ENCODE measurements at regions of chr20 and their contacts with region 1.

Region 1: GRCh38 chr20:18412221-18412901 is 54.5 kb downstream of the DZANK1 start:
- DNase-seq: peak; percentile 28
- ATAC-seq: peak; percentile 80
- H3K4me3 ChIP-seq: peak overlapping the region; percentile 41
- H3K27ac ChIP-seq: peak overlapping the region; percentile 82
- H3K4me1 ChIP-seq: peaks cover 9% of the 10 kb centered on the region
- H3K27me3 ChIP-seq: no peaks in the 10 kb centered on the region
- CTCF ChIP-seq: no peak
- EP300 ChIP-seq: no peak
- POLR2A ChIP-seq: no peak
- RAD21 ChIP-seq: no peak

Region 2: DNA sequence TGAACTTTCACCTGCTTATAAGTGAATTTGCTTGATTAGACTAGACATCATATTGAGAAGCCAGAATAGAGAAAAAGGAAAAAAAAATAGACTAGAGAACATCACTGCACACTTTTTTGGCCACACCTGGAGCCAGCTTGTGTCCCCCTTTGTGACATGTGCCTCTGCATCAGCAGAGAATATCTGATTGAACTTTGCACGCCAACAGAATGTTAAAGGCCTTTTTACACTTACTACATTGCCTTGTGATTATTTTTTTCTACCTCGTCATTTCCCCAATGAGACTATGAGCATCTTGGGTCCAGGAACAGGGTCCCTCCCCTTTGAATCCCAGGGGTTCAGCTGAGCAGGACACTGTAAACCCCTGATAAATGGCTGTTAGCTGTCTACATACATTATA is 141.2 kb before region 1 on chr20:
- CTCF ChIA-PET with region 1: no interaction called
- POLR2A ChIA-PET with region 1: no interaction called
- RAD21 ChIA-PET with region 1: no interaction called
- SMC1A ChIA-PET with region 1: no interaction called
- in situ Hi-C with region 1: no loop called
- intact Hi-C with region 1: no loop called
- DNase-seq: no peak
- ATAC-seq: no peak
- H3K4me3 ChIP-seq: no peak overlapping the region
- H3K27ac ChIP-seq: no peak overlapping the region
- H3K4me1 ChIP-seq: no peaks in the 10 kb centered on the region
- H3K27me3 ChIP-seq: no peaks in the 10 kb centered on the region; a peak in 1 of 4 replicates
- CTCF ChIP-seq: no peak
- EP300 ChIP-seq: no peak
- POLR2A ChIP-seq: no peak
- RAD21 ChIP-seq: no peak

Region 3: GRCh38 chr20:18287915-18288748 is 124.2 kb before region 1 on chr20 and contains the start of gene ZNF133:
- CTCF ChIA-PET with region 1: no interaction called
- POLR2A ChIA-PET with region 1: interaction called, 3 read pairs
- RAD21 ChIA-PET with region 1: interaction called, 4 read pairs
- SMC1A ChIA-PET with region 1: no interaction called
- in situ Hi-C with region 1: no loop called
- intact Hi-C with region 1: loop called (anchors 1 kb)
- DNase-seq: peak; percentile 78
- ATAC-seq: peak; percentile 100
- H3K4me3 ChIP-seq: peak within 1 kb of the TSS; percentile 92
- H3K27ac ChIP-seq: peak within 1 kb of the TSS; percentile 94
- H3K4me1 ChIP-seq: peaks cover 11% of the 10 kb centered on the region
- H3K27me3 ChIP-seq: no peaks in the 10 kb centered on the region
- CTCF ChIP-seq: peak in 2 of 3 experiments; percentile 13 to 14; a peak in 2 of 6 replicates
- EP300 ChIP-seq: no peak
- POLR2A ChIP-seq: peak; percentile 97
- RAD21 ChIP-seq: no peak
- polyA plus RNA-seq, gene ZNF133: 2.0 to 2.2 TPM

Region 4: DNA sequence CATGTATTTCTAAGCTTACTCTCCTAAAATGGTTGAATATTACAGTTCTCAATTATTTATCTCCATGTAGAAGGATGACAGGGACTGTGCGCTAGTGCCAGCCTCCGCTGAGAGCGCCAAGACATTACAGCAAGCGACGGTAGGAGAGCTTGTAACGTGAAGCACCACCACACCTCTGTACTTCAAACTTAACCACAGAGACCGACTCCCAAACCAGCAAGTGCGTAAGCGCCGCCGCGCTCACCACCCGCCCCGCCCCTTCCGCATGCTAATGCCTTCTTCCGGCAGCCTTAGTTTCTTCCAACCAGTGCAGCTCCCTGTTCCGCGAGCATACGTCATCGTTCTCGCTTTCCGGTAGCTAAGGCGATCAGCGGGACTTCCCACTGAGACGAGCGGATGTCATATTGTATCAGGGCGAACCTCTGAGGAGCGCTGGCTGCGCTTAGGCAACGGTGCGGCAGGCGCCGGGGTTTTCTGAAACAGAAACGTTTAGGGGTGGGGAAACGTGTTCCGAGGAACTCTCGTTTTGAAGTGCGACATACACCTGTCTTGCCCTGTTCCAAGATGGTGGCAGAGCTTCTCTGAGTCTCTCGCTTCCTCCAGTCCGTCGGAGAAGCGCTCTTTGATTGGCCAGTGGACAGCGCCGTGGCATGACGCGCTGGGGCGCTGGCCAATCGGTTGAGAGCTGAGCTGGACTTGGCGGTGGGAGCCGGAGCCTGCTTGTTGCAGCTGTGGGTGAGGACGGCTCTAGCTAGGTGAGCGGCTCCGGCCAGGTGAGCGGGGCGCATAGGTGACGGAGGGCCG is 95.1 kb after region 1 on chr20 and contains the start of gene SEC23B:
- CTCF ChIA-PET with region 1: interaction called, 21 read pairs
- POLR2A ChIA-PET with region 1: interaction called, 10 read pairs
- RAD21 ChIA-PET with region 1: interaction called, 8 read pairs
- SMC1A ChIA-PET with region 1: interaction called, 8 read pairs
- in situ Hi-C with region 1: no loop called
- intact Hi-C with region 1: loop called (anchors 2 kb)
- DNase-seq: peak; percentile 96
- ATAC-seq: peak; percentile 96
- H3K4me3 ChIP-seq: peak within 1 kb of the TSS; percentile 80
- H3K27ac ChIP-seq: peak within 1 kb of the TSS; percentile 98
- H3K4me1 ChIP-seq: no peaks in the 10 kb centered on the region
- H3K27me3 ChIP-seq: no peaks in the 10 kb centered on the region
- CTCF ChIP-seq: no peak
- EP300 ChIP-seq: peak; percentile 34 to 36; a peak in 1 of 4 replicates
- POLR2A ChIP-seq: peak; percentile 91
- RAD21 ChIP-seq: no peak
- polyA plus RNA-seq, gene SEC23B: 49.1 to 73.2 TPM

Region 5: DNA sequence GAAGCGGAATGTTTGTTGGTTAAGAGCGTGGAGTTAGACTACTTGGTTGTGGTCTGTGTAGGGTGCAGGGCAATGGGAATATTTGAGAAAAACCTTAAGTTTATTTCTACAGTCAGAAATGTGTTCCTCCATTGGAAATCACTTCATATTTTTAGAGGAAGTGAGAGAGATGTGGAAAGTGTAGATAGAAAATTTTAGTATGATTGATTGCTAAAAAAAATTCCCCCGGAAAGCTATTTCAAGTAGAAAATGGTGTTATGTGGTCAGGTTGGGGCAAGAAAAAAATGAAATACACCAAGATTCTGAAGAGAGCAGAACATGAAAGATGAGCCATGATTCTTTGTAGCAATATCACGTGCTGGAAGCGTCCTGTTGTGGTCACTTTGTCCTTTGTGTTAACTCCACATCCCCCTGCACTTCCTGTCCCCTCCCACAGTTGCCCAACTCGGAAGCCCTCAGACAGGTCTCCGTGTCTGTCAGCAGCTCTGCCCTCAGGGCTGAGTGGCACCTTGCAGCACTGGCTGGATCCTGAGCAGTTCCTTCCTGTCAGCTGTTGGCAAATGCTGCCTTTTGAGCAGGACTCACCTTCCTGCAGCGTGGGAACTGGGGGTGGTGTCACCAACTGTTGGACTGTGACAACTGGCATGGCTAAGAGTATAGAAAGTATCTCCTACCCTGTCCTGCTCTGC is 662.6 kb after region 1 on chr20:
- CTCF ChIA-PET with region 1: interaction called, 4 read pairs
- POLR2A ChIA-PET with region 1: no interaction called
- RAD21 ChIA-PET with region 1: no interaction called
- SMC1A ChIA-PET with region 1: interaction called, 6 read pairs
- in situ Hi-C with region 1: loop called (anchors 25 kb)
- intact Hi-C with region 1: loop called (anchors 5 kb)
- DNase-seq: peak; percentile 88
- ATAC-seq: peak; percentile 65
- H3K4me3 ChIP-seq: no peak overlapping the region
- H3K27ac ChIP-seq: peak overlapping the region; percentile 68
- H3K4me1 ChIP-seq: peaks cover 39% of the 10 kb centered on the region
- H3K27me3 ChIP-seq: no peaks in the 10 kb centered on the region
- CTCF ChIP-seq: no peak
- EP300 ChIP-seq: peak; percentile 59 to 68; a peak in 2 of 4 replicates
- POLR2A ChIP-seq: no peak
- RAD21 ChIP-seq: no peak

Region 6: GRCh38 chr20:19583532-19584175 is 1171.3 kb after region 1 on chr20:
- CTCF ChIA-PET with region 1: interaction called, 3 read pairs
- POLR2A ChIA-PET with region 1: no interaction called
- RAD21 ChIA-PET with region 1: interaction called, 5 read pairs
- SMC1A ChIA-PET with region 1: no interaction called
- in situ Hi-C with region 1: no loop called
- intact Hi-C with region 1: loop called (anchors 10 kb)
- DNase-seq: no peak
- ATAC-seq: peak; percentile 87
- H3K4me3 ChIP-seq: no peak overlapping the region
- H3K27ac ChIP-seq: no peak overlapping the region
- H3K4me1 ChIP-seq: no peaks in the 10 kb centered on the region
- H3K27me3 ChIP-seq: no peaks in the 10 kb centered on the region; a peak in 2 of 4 replicates
- CTCF ChIP-seq: peak; percentile 70 to 87 (median 73)
- EP300 ChIP-seq: no peak
- POLR2A ChIP-seq: no peak
- RAD21 ChIP-seq: peak; percentile 95